Calu3 (cell line): ENCODE measurements at regions of chr5 and their contacts with region 1.

Region 1: GRCh38 chr5:80487829-80488721 is at the start of gene FAM151B:
- DNase-seq: peak; percentile 99
- H3K4me3 Mint-ChIP-seq: peak within 1 kb of the TSS; percentile 89
- H3K27ac Mint-ChIP-seq: peak within 1 kb of the TSS; percentile 71
- H3K4me1 Mint-ChIP-seq: peaks cover 35% of the 10 kb centered on the region
- H3K27me3 Mint-ChIP-seq: no peaks in the 10 kb centered on the region
- CTCF ChIP-seq: no peak
- total RNA-seq, gene FAM151B: 1.3 and 2.0 TPM in 2 replicates

Region 2: DNA sequence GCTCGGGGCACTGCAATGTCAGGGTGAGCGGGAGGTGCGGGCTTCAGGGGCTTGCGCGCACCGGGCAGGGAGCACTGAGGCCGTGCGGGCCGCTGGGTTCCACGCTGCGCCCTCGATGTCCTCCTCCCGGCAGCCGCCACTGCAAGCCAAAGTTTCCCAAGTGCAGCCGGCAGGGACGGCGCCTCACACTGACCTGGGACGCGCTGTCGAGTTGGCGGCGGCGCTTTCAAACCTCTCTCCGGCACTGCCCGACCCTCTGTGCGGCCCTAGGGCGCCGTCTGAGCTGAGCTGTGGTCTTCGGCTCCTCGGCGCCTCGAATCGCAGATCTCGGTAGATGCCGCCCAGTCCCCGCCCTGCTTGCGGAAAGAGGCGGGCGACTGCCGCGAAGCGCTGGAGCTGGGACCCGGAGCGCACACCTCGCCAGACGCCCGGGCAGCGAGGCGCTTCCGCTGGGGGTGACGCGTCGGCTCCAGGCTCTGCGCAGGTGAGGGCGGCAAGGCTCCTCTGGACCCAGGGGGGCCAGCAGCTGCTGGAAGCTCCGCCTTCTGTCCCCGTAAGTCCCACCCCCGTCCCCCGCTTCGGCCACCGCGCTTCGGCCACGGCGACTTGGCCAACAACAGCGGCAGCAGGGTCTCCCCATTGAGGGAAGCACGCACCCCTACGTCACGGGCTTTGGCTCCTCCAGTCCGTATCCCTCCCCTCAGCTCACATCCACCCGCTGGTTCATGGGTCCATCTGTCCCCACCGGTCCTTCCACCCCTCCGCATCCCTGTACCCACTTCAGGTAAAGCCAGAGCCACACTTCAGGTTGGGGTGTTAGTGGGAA is 82.1 kb after region 1 on chr5 and contains the start of gene ANKRD34B:
- CTCF ChIA-PET with region 1: no interaction called
- intact Hi-C with region 1: loop called (anchors 5 kb)
- DNase-seq: peak; percentile 43
- H3K4me3 Mint-ChIP-seq: peak within 1 kb of the TSS; percentile 65
- H3K27ac Mint-ChIP-seq: no peak within 1 kb of the TSS
- H3K4me1 Mint-ChIP-seq: peaks cover 14% of the 10 kb centered on the region
- H3K27me3 Mint-ChIP-seq: peaks cover 75% of the 10 kb centered on the region
- CTCF ChIP-seq: no peak
- total RNA-seq, gene ANKRD34B: 0.29 and 0.40 TPM in 2 replicates

Region 3: DNA sequence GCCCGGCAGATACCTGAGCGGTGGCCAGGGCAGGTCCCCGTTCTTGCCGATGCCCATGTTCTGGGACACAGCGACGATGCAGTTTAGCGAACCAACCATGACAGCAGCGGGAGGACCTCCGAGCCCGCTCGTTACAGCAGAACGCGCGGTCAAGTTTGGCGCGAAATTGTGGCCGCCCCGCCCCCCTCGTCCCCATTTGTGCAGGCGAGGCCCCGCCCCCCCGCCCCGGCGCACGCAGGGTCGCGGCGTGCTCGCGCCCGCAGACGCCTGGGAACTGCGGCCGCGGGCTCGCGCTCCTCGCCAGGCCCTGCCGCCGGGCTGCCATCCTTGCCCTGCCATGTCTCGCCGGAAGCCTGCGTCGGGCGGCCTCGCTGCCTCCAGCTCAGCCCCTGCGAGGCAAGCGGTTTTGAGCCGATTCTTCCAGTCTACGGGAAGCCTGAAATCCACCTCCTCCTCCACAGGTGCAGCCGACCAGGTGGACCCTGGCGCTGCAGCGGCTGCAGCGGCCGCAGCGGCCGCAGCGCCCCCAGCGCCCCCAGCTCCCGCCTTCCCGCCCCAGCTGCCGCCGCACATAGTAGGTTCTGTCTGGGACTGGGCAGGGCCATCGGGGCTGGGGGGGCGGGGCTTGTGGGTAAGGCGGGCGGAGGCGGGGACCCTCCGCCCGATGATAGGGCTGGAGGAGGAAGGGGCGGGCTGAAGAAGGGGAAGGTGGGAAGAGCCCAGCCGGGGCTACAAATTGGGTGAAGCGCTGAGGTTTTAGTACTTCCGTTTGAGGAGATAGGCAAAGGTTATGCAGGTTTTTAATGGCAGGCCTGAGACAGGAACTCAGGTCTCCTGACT is 166.5 kb after region 1 on chr5 and contains the starts of genes DHFR and MSH3:
- CTCF ChIA-PET with region 1: interaction called, 3 read pairs
- intact Hi-C with region 1: loop called (anchors 2 kb)
- DNase-seq: peak; percentile 94
- H3K4me3 Mint-ChIP-seq: peak within 1 kb of the TSS; percentile 80
- H3K27ac Mint-ChIP-seq: peak within 1 kb of the TSS; percentile 80
- H3K4me1 Mint-ChIP-seq: peaks cover 23% of the 10 kb centered on the region
- H3K27me3 Mint-ChIP-seq: no peaks in the 10 kb centered on the region
- CTCF ChIP-seq: no peak
- total RNA-seq, gene DHFR: 46.9 and 58.0 TPM in 2 replicates
- total RNA-seq, gene MSH3: 15.5 and 17.2 TPM in 2 replicates

Region 4: DNA sequence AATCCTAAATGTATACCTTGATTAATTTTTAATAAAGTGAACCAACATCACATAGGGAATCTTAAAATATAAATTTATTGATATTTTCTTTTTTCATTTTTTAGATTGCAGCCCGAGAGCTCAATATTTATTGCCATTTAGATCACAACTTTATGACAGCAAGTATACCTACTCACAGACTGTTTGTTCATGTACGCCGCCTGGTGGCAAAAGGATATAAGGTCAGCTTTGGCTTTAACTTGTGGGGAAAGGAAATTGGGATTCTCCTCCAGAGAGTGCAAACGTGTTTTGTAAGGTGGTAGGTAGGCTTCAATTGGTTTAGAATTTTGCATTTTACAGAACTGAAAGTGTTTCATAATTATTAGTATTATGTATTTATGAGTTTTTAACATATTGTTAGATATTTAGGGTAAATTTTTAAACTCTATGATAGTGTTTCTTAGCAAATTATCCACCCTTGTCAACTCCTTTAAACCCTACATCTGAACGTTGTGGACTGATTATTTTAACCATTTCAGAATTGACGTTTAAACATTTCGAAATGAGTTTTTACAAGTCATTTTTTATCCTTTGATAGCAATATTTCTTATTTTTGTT is 184.2 kb after region 1 on chr5:
- CTCF ChIA-PET with region 1: interaction called, 3 read pairs
- intact Hi-C with region 1: loop called (anchors 2 kb)
- DNase-seq: peak; percentile 80
- H3K4me3 Mint-ChIP-seq: no peak overlapping the region
- H3K27ac Mint-ChIP-seq: no peak overlapping the region
- H3K4me1 Mint-ChIP-seq: no peaks in the 10 kb centered on the region
- H3K27me3 Mint-ChIP-seq: no peaks in the 10 kb centered on the region
- CTCF ChIP-seq: peak; percentile 80